ENCODE measurements at regions of chrX and their contacts with region 1.

Region 1: DNA sequence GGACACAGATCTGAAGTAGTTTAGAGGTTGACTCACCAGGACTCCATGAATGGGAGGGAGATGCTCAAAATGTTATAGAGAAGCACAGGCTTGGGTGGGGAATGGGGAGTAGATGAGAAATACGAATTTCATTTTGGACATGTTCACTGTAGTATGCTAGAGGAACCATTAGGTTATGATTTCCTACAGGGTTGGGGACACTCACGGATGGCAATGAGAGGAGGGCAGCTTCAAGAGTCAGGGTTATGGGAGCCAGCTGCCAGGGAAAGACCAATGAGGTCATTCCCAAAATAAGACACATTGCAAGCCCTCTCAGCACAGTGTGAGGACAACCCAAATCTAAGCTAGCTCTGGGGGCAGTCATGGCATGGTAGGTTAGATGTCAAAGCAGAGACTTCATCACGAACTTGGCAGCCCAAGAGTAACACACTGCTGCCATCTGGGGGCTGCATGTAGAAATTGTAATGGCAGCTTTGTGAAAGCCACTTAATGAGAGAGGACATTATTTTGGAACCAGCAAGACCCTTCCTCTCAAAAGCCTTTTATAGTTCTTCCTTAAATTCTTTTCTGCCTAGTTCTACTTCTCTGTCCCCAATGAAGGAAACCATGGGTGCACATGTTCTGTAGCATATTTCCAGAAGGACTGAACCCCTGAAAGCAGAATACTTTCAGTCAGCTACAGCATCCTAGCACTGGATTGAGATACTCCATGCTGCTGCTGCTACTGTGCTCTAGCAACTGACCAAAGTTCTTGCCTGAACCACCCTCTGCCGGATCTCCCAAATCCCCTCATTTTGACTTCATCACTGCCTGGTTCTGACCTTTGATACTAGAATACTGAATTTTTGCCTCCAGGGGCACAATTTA is 16.2 kb upstream of the ZCCHC12 start:
- DNase-seq: peak; percentile 4 to 29
- ATAC-seq: peak in 1 of 2 donors; percentile 53
- H3K4me3 ChIP-seq: no peak overlapping the region
- H3K27ac ChIP-seq: no peak overlapping the region
- H3K4me1 ChIP-seq: no peaks in the 10 kb centered on the region
- H3K27me3 ChIP-seq: no peaks in the 10 kb centered on the region
- CTCF ChIP-seq: peak; percentile 53 to 67 (median 66)
- POLR2A ChIP-seq: no peak

Region 2: GRCh38 chrX:118603981-118604380 is 203.4 kb before region 1 on chrX:
- in situ Hi-C with region 1: loop called in 1 of 4 experiments (anchors 10 kb)
- intact Hi-C with region 1: loop called (anchors 1 kb)
- DNase-seq: peak; percentile 3 to 36
- ATAC-seq: peak; percentile 75 to 95
- H3K4me3 ChIP-seq: peak overlapping the region in 1 of 4 donors; percentile 34
- H3K27ac ChIP-seq: no peak overlapping the region
- H3K4me1 ChIP-seq: no peaks in the 10 kb centered on the region
- H3K27me3 ChIP-seq: no peaks in the 10 kb centered on the region
- CTCF ChIP-seq: peak; percentile 45 to 77 (median 66)
- POLR2A ChIP-seq: no peak

Region 3: GRCh38 chrX:118637997-118638396 is 169.4 kb before region 1 on chrX:
- in situ Hi-C with region 1: loop called (anchors 5 to 10 kb)
- intact Hi-C with region 1: no loop called
- DNase-seq: no peak
- ATAC-seq: no peak
- H3K4me3 ChIP-seq: no peak overlapping the region
- H3K27ac ChIP-seq: no peak overlapping the region
- H3K4me1 ChIP-seq: no peaks in the 10 kb centered on the region
- H3K27me3 ChIP-seq: no peaks in the 10 kb centered on the region
- CTCF ChIP-seq: no peak
- POLR2A ChIP-seq: no peak

Region 4: GRCh38 chrX:118862091-118862490 is 54.7 kb after region 1 on chrX:
- in situ Hi-C with region 1: no loop called
- intact Hi-C with region 1: no loop called
- DNase-seq: no peak
- ATAC-seq: no peak
- H3K4me3 ChIP-seq: no peak overlapping the region
- H3K27ac ChIP-seq: no peak overlapping the region
- H3K4me1 ChIP-seq: peaks cover 0 to 10% of the 10 kb centered on the region in 2 donors
- H3K27me3 ChIP-seq: no peaks in the 10 kb centered on the region
- CTCF ChIP-seq: no peak
- POLR2A ChIP-seq: no peak

Measured in gastrocnemius medialis (tissue), 4 donors.